Right ventricle myocardium superior (tissue), 1 donor: ENCODE measurements at regions of chr7 and their contacts with region 1.

Region 1: GRCh38 chr7:120949393-120949911 is 1.1 kb upstream of the ING3 start:
- DNase-seq: no peak
- ATAC-seq: no peak

Region 2: GRCh38 chr7:120774481-120774880 is 175.0 kb before region 1 on chr7:
- intact Hi-C with region 1: no loop called
- DNase-seq: no peak
- ATAC-seq: no peak

Region 3: DNA sequence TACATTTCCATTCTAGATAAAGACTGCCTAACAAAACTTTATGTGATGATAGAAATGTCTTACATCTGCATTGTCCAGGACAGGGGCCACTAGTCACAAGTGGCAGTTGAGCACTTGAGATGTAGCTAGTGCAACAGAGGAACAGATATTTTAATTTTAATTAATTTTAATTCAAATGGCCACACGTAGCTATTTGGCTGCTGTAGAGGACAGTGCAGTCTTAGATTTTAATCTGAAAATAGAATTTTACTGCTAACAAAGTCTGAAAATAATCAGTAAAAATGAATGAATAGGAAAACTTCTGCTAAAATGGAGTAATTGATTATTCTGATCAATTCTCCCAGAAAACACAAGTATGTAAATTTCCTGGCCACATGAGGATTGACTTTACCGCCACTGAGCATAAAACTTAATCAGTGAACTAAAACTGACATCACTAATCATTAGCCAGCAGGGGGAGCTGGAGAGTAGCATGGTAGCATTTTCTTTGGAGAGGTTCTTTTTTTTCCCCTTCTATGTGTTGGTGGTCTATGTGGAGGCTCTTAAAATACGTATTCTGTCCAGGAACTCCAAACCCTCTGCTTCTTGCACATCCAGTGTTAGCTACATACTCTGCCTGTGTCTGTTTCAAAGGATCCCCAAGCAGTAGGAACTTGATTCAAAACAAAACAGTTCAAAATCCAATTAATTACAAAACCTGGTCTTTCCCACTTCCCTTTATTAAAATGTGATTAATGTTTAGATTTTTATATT is 143.6 kb before region 1 on chr7:
- intact Hi-C with region 1: loop called (anchors 5 kb)
- DNase-seq: no peak
- ATAC-seq: peak; percentile 71

Region 4: DNA sequence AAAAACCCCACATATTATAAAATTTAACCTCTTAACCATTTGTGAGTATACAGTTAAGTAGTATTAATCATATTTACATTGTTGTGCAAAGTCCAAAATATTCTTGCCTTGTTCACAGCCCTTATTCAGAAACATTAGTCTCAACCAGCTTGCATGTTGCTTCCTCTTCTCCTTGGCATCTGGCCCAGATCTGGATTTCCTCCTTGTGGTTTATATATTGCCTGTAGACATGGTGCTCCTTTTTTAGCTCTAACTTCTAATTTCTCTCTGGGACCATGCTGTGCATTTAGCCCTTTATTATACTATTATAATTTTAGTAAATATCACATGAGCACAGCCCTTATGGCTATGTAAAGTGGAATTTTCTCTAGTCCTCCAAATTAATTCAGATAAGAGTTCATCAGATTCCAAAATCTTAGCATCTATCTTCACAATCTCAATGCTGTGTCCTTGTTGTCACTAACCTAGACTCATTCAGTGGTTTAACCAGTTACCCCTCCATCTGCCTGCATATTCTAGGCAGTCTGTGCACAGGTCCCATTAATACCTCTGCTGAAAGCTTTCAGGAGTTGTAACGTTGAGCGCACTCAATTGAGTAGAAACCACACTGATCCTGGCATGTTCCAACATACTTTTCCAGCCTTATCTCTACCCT is 47.0 kb after region 1 on chr7:
- intact Hi-C with region 1: no loop called
- DNase-seq: peak; percentile 45
- ATAC-seq: peak; percentile 63

Region 5: DNA sequence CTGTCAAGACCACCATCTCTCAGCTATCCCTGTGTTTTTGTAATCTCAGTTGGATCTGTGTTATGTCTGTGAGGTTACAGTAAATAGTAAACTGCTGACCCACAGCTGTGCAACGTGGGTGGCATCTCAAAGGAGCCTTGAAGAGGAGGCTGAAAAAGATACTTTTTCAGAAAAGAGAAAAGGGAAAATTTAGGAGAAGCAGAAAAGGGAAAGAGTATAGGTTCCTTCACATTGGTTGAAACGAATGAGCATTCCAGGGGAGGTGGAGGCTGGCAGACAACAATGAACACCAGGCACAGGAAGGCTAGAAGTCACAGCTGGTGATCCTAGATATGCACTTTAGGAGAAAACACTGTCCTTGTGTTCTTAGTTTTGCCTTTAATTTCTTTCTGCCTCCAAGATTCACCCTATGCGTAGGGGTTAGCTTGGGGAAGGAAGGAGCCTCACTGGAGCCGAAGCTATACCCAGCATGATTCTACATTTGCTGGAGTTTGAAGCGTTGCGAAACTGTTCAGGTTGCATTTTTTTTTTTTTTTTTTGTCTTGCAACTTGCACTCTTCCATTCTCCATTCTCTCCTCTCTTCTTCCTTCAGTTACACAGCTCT is 57.4 kb after region 1 on chr7:
- intact Hi-C with region 1: no loop called
- DNase-seq: no peak
- ATAC-seq: no peak

Region 6: DNA sequence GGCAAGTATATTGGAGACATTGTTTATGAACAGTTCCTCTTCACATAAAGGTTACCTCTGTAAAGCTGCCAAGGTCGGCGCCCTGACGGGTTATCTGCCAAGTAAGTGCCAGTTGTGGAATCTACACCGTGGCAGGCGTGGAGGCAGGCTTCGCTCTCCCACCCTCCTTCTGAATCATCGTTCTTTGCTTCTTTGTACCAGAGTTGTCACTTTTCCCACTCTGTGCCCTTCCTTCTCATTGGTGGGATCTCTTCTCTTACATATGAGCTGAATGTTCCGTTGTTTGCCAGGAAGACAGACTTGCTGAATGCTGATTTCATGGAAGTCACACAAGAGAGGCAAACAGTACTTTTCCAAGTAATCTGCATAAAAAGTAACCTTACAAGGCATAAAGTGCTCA is 882.9 kb after region 1 on chr7:
- intact Hi-C with region 1: no loop called
- DNase-seq: no peak
- ATAC-seq: no peak